Mammary epithelial cell (primary cell): ENCODE measurements at regions of chr9 and their contacts with region 1.

Region 1: DNA sequence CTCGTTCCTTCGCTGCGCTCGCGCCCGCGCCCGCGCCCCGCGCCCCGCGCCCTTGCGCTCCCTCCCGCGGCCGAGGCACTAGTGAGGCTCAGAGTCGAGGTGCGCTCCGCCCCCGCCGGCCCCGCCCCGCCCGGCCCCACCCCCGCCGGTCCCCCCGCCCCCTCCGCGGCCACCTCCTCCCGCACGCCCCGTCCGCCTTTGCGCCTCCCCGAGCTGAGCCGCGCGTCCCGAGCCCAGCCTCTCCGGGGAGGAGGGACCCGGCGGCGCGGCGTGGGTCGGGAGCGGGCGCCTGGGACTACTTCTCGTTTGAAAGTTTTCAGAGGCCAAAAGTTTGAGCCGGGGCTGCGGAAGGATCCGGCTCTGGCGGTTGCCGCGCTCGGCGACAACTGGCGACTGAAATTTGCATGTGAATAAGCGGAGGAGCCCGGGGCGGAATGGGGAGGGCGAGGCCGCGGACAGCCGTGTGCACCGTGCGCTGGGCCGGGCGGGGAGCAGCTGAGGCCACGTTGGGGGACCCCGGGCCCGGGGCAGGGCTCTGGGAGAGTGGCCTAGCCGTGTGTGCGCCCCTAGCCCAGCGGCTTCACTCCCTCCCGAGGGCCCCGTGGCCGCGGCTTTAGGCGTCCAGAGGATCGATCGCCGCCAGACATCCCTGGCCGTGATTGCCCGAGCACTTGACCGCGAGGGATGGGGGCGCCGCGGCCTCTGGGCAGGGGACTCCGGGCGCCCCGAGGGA is at the start of gene NOTCH1:
- DNase-seq: peak; percentile 96
- H3K4me3 ChIP-seq: peak within 1 kb of the TSS; percentile 73 to 98 (median 86)
- H3K27ac ChIP-seq: peak within 1 kb of the TSS; percentile 91
- H3K4me1 ChIP-seq: peaks cover 61% of the 10 kb centered on the region
- H3K27me3 ChIP-seq: no peaks in the 10 kb centered on the region
- CTCF ChIP-seq: no peak
- total RNA-seq, gene NOTCH1: 170 to 189 TPM

Region 2: GRCh38 chr9:136512651-136513071 is 33.5 kb before region 1 on chr9:
- CTCF ChIA-PET with region 1: no interaction called
- dilution Hi-C with region 1: no loop called
- in situ Hi-C with region 1: no loop called
- intact Hi-C with region 1: loop called (anchors 2 kb)
- DNase-seq: no peak
- H3K4me3 ChIP-seq: no peak overlapping the region
- H3K27ac ChIP-seq: no peak overlapping the region
- H3K4me1 ChIP-seq: no peaks in the 10 kb centered on the region
- H3K27me3 ChIP-seq: no peaks in the 10 kb centered on the region
- CTCF ChIP-seq: no peak

Region 3: GRCh38 chr9:136599811-136600660 is 53.9 kb after region 1 on chr9:
- CTCF ChIA-PET with region 1: no interaction called
- dilution Hi-C with region 1: loop called (anchors 5 kb)
- in situ Hi-C with region 1: no loop called
- intact Hi-C with region 1: no loop called
- DNase-seq: no peak
- H3K4me3 ChIP-seq: no peak overlapping the region
- H3K27ac ChIP-seq: no peak overlapping the region
- H3K4me1 ChIP-seq: peaks cover 46% of the 10 kb centered on the region
- H3K27me3 ChIP-seq: no peaks in the 10 kb centered on the region
- CTCF ChIP-seq: no peak

Region 4: GRCh38 chr9:136625101-136626060 is 79.2 kb after region 1 on chr9:
- CTCF ChIA-PET with region 1: no interaction called
- dilution Hi-C with region 1: no loop called
- in situ Hi-C with region 1: loop called in 1 of 2 experiments (anchors 5 kb)
- intact Hi-C with region 1: loop called (anchors 1 kb)
- DNase-seq: peak; percentile 58
- H3K4me3 ChIP-seq: no peak overlapping the region
- H3K27ac ChIP-seq: no peak overlapping the region
- H3K4me1 ChIP-seq: peaks cover 54% of the 10 kb centered on the region
- H3K27me3 ChIP-seq: no peaks in the 10 kb centered on the region
- CTCF ChIP-seq: peak; percentile 18 to 67

Region 5: DNA sequence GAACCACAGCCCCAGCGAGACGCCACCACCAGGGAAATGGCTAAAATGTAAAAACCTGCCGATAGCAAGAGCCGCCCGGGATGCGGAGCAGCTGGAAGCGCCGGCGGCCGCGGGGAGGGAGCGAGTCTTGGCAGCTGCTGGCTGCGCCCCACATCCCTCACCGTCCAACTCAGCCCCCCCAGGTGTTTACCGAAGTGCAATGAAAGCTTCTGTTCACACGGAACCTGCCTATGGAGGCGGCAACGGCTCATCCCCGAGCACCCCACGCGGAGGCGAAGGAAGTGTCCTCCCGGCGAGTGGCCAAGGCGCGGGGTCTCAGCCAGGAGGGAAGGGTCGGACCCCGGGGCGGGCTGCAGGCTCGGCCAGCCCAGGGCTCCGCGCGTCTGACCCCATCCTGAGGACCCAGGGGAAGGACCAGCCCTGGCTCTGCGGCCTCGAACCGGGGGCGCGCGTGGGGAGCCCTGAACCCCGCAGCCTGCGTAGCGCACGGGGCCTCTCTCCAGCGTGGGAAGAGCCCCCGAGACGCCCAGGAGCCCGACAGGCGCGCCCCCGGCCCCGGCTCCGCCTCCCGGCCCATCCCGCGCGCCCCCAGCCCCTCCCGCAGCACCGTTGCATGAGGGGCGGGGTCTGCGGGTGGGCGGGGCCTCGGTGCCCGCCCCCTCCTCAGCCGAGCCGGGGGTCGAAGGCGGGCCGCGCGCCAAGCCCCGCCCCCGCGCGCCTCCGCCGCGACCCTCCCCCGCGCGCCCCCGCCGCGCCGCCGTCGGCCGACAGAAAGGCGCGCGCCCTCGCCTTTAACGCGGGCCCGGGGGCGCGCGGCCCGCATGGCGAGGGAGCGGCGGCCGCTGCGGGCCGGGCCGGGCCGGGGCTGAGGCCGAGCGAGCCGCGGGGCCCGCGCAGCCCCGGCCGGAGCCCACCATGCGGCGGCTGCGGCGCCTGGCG is 165.9 kb after region 1 on chr9 and contains the start of gene DIPK1B:
- CTCF ChIA-PET with region 1: no interaction called
- dilution Hi-C with region 1: no loop called
- in situ Hi-C with region 1: no loop called
- intact Hi-C with region 1: no loop called
- DNase-seq: no peak
- H3K4me3 ChIP-seq: no peak within 1 kb of the TSS
- H3K27ac ChIP-seq: no peak within 1 kb of the TSS
- H3K4me1 ChIP-seq: no peaks in the 10 kb centered on the region
- H3K27me3 ChIP-seq: peaks cover 6% of the 10 kb centered on the region
- CTCF ChIP-seq: no peak
- total RNA-seq, gene DIPK1B: 0.35 to 0.50 TPM